Activated CD8-positive, alpha-beta T cell treated with anti-CD3 and anti-CD28 coated beads, Interleukin-2, amount 10 ng/mL, durations not matched to agents 7 days and 5 days (primary cell): ENCODE measurements at regions of chr12 and their contacts with region 1.

Region 1: GRCh38 chr12:107622005-107622404 is 63.6 kb upstream of the PWP1 start:
- DNase-seq: no peak
- ATAC-seq: no peak
- H3K4me3 Mint-ChIP-seq: no peak overlapping the region
- H3K27ac Mint-ChIP-seq: no peak overlapping the region
- H3K4me1 Mint-ChIP-seq: no peaks in the 10 kb centered on the region
- H3K27me3 Mint-ChIP-seq: no peaks in the 10 kb centered on the region

Region 2: DNA sequence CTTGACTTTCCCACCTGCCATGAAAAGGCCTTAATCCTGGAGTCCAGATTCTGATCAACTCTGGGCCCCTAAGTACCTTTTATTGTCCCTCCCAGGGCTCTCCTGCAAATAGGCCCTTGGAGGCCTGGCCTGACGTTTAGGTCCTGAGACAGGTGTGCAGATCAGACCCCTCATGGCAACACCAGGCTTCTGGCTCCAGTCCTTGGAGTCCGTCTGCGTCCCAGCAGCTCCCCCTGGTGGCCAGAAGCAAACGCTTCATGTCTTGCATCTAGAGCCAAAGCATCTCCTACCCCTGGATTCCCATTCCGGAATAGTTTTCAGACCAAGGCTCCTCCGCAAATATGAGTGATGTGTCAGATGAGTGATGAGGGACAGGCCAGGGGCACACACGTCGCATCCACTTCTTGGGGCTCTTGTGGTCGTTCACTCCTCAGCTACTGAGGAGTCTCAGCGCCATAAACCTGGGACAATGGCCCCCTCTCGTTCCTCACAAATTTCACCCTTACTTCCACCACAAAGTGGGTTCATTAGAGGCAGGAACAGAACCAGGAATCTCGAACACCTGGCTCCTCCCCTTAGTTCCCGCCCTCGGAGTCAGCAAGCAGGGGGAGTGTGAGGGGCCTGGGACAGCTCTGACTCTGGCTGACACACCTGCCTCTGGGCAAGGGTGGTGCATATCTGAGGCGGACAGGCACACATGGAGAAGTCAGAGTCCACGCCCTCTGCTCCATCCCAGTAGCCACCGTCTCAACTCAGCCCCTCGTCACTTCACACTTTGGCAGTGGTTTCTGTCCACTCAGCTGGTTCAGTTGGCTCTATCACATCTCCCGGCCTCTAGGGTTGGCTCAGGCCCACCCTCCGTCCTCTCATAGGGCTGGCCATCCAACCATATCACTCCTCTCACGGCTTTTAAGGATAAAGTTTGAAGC is 14.3 kb before region 1 on chr12:
- CTCF ChIA-PET with region 1: interaction called, 13 read pairs
- POLR2A ChIA-PET with region 1: no interaction called
- DNase-seq: peak; percentile 84
- ATAC-seq: peak; percentile 76
- H3K4me3 Mint-ChIP-seq: no peak overlapping the region
- H3K27ac Mint-ChIP-seq: no peak overlapping the region
- H3K4me1 Mint-ChIP-seq: no peaks in the 10 kb centered on the region
- H3K27me3 Mint-ChIP-seq: no peaks in the 10 kb centered on the region

Region 3: DNA sequence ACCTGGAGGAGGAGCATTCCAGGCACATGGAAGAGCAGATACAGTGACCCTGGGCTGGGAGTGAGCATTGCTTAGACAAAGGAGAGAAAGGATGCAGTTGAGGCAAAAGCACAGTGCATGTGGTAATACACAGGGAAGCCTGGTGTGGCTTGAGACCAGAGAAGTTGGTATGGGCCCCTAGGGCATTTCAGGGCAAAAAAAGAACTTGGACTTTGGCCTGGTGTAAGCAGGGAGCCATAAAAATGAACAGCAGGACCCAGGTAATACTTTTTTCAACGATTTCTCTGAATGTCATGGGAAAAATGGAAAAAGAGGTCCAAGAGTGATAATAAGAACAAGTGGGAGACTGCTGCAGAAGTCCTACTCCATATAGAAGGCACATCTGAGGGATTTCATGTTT is 316.4 kb after region 1 on chr12:
- CTCF ChIA-PET with region 1: no interaction called
- POLR2A ChIA-PET with region 1: no interaction called
- DNase-seq: no peak
- ATAC-seq: no peak
- H3K4me3 Mint-ChIP-seq: no peak overlapping the region
- H3K27ac Mint-ChIP-seq: no peak overlapping the region
- H3K4me1 Mint-ChIP-seq: no peaks in the 10 kb centered on the region
- H3K27me3 Mint-ChIP-seq: peaks cover 27% of the 10 kb centered on the region

Region 4: GRCh38 chr12:107948391-107948945 is 326.5 kb after region 1 on chr12:
- CTCF ChIA-PET with region 1: no interaction called
- POLR2A ChIA-PET with region 1: no interaction called
- DNase-seq: no peak
- ATAC-seq: no peak
- H3K4me3 Mint-ChIP-seq: no peak overlapping the region
- H3K27ac Mint-ChIP-seq: no peak overlapping the region
- H3K4me1 Mint-ChIP-seq: no peaks in the 10 kb centered on the region
- H3K27me3 Mint-ChIP-seq: peaks cover 14% of the 10 kb centered on the region